ENCODE measurements at regions of chr11 and their contacts with region 1.

Region 1: GRCh38 chr11:2151500-2152257 is 9.3 kb downstream of the INS start:
- DNase-seq: peak; percentile 87
- H3K27ac ChIP-seq: peak overlapping the region; percentile 51
- CTCF ChIP-seq: peak; percentile 79

Region 2: GRCh38 chr11:1652771-1653540 is 498.7 kb before region 1 on chr11:
- CTCF ChIA-PET with region 1: interaction called, 42 read pairs
- POLR2A ChIA-PET with region 1: no interaction called
- DNase-seq: peak; percentile 77
- H3K27ac ChIP-seq: no peak overlapping the region
- CTCF ChIP-seq: peak; percentile 91

Region 3: GRCh38 chr11:1876361-1877063 is 275.2 kb before region 1 on chr11:
- CTCF ChIA-PET with region 1: interaction called, 20 read pairs
- POLR2A ChIA-PET with region 1: no interaction called
- DNase-seq: peak; percentile 19
- H3K27ac ChIP-seq: peak overlapping the region; percentile 100
- CTCF ChIP-seq: peak; percentile 75

Region 4: GRCh38 chr11:2027708-2028107 is 124.0 kb before region 1 on chr11:
- CTCF ChIA-PET with region 1: interaction called, 71 read pairs
- POLR2A ChIA-PET with region 1: interaction called, 3 read pairs
- DNase-seq: no peak
- H3K27ac ChIP-seq: no peak overlapping the region
- CTCF ChIP-seq: no peak

Region 5: DNA sequence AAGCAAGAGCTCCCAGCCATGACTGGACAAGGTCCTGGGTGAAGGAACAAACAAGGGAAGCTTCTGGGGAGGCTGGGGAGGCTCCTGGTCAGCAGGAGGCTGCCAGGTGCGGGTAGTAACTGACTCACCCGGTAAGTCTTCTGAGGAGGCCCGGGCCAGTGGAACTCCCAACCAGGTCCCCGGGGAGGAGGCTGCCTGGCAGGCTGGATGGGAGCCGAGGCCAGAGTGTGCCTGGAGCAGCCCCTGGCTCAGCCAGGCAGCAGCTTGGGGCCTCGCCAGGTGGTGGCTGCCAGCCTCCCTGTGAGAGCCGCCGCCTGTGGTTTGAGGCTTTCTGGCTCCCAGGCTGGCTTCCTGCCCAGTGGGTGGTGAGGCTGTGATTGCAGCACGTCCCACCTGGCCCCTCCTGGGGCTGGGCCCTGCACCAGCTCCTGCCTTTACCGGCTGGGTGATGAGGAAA is 58.7 kb before region 1 on chr11:
- CTCF ChIA-PET with region 1: interaction called, 10 read pairs
- POLR2A ChIA-PET with region 1: no interaction called
- DNase-seq: peak; percentile 86
- H3K27ac ChIP-seq: peak overlapping the region; percentile 80
- CTCF ChIP-seq: no peak

Region 6: GRCh38 chr11:2126520-2127085 is 25.1 kb before region 1 on chr11:
- CTCF ChIA-PET with region 1: no interaction called
- POLR2A ChIA-PET with region 1: no interaction called
- DNase-seq: no peak
- H3K27ac ChIP-seq: no peak overlapping the region
- CTCF ChIP-seq: no peak

Region 7: GRCh38 chr11:2166091-2166851 is 14.6 kb after region 1 on chr11:
- CTCF ChIA-PET with region 1: interaction called, 19 read pairs
- POLR2A ChIA-PET with region 1: no interaction called
- DNase-seq: no peak
- H3K27ac ChIP-seq: 0 out of 2 replicates have a peak overlapping the region, but pooled peaks have one; percentile 16
- CTCF ChIP-seq: peak; percentile 81

Measured in RWPE1 (cell line).